ENCODE measurements at regions of chr22 and their contacts with region 1.

Region 1: DNA sequence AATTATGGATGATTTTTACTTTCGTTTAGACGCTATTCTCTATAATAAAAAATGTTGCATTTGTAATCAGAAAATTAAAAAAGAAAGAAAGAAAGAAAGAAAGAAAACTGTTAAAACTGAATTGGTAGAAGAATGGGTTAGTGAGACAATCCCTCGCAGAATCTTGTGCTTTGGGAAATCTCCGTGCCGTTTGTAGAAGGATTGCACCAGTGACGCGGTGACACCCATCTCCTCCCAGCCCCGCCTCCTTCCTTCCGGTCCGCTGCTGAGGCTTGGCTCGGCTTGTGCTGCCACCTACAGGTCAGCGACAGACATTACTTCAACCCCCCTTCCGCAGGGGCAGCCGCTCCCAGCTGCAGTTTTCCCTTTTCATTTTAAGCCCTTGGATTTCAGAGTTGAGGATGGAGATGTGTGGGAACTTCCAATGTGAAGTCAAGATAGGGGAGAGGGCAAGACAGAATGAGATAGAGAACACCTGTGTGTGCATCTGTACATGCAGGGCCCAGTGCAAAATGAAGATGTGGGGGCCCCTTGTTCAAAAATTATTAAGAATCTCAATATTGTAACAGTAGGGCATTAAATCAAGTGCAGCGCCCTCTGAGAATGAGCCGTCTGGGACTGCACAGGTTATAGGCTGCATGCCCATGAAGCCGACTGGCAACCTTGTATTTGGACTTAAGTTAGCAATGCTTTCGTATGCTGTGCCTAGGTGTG is 41.1 kb downstream of the TST start:
- DNase-seq: peak; percentile 96
- H3K4me3 ChIP-seq: peak overlapping the region in 3 of 4 donors; percentile 36 to 48 (median 45)
- H3K27ac ChIP-seq: peak overlapping the region in 3 of 4 donors; percentile 19 to 59 (median 50)
- H3K4me1 ChIP-seq: peaks cover 0 to 7% (median 2%) of the 10 kb centered on the region in 4 donors
- H3K27me3 ChIP-seq: no peaks in the 10 kb centered on the region
- CTCF ChIP-seq: peak; percentile 92 to 94 (median 93)
- EP300 ChIP-seq: no peak
- POLR2A ChIP-seq: no peak

Region 2: DNA sequence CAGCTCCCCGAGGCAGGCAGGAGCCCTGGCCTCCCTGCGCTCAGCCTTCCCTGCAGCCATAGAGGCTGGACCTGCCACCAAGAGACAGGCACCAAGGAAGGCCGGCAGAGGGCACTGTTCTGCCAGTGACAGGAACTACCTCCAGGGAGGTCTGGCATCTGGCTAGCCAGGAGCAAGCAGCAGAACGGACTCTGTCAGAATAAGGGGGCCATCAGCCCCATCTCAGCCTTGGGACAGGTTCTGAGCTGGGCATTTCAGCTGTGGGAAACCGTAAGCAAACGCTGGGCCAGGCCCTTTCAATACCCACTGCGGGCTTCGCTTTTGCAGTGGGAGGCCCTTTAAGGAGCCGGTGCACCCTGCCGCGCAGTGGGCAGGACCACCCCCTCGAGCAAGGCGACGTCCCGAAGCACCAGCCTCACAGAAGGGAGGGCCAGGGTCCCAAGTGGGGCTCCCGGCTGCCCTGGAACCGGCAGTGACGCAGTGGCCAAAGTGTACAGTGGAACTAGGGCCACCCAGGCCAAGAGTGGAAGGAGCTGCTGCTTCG is 220.4 kb before region 1 on chr22:
- intact Hi-C with region 1: loop called (anchors 5 kb)
- DNase-seq: peak; percentile 88
- H3K4me3 ChIP-seq: no peak overlapping the region
- H3K27ac ChIP-seq: no peak overlapping the region
- H3K4me1 ChIP-seq: peaks cover 0 to 33% (median 28%) of the 10 kb centered on the region in 4 donors
- H3K27me3 ChIP-seq: peaks cover 3 to 30% (median 14%) of the 10 kb centered on the region in 3 donors
- CTCF ChIP-seq: peak; percentile 65 to 84 (median 70)
- EP300 ChIP-seq: no peak
- POLR2A ChIP-seq: no peak

Region 3: GRCh38 chr22:36856121-36856791 is 121.8 kb before region 1 on chr22:
- intact Hi-C with region 1: loop called (anchors 1 kb)
- DNase-seq: peak; percentile 94
- H3K4me3 ChIP-seq: no peak overlapping the region
- H3K27ac ChIP-seq: no peak overlapping the region
- H3K4me1 ChIP-seq: peaks cover 0 to 12% (median 3%) of the 10 kb centered on the region in 4 donors
- H3K27me3 ChIP-seq: no peaks in the 10 kb centered on the region
- CTCF ChIP-seq: peak; percentile 99 to 100 (median 100)
- EP300 ChIP-seq: no peak
- POLR2A ChIP-seq: no peak

Region 4: DNA sequence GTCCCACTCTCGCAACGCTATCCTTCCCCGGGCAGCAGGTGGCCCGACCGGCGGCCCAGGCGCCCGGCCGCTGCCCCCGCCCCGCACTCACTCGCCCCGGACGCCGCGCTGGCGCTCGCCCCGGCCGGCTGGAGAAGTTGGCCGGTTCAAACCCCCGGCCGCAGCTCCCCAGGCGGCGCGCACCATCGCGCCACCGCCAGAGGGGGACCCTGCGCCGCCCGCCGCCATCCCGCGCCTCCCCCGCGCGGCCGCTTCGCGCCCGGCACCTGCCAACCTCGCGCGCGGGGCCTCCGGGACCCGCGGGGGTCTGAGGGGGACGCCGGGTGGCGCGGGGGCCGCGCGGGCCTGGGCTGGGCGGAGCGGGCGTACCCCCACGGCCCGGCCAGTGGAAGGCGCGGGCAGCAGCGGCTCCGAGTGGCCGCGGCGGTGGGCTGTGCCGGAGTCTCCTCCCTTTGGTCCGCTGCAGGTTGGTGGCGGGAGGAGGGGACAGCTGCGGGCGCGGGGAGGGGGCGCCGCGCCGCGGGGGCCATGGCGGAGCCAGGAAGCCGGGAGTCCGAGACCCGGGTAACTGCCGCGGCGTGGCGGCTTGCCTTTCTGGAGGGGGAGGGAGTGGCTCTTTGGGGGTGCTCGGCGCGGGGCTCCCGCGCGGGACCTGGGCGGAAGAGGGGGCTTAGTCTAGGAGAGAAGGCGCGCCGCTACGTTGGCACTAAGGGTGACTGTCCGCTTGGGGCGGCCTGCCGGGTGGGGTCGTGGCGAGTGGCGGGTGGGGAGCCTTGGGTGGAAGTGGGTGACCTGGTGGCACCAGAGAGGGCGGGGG is 41.4 kb after region 1 on chr22 and contains the starts of genes MPST and TST:
- intact Hi-C with region 1: loop called (anchors 5 kb)
- DNase-seq: peak; percentile 89
- H3K4me3 ChIP-seq: peak within 1 kb of the TSS; percentile 76 to 99 (median 91)
- H3K27ac ChIP-seq: peak within 1 kb of the TSS; percentile 88 to 93 (median 89)
- H3K4me1 ChIP-seq: peaks cover 0 to 58% (median 46%) of the 10 kb centered on the region in 4 donors
- H3K27me3 ChIP-seq: no peaks in the 10 kb centered on the region
- CTCF ChIP-seq: no peak
- EP300 ChIP-seq: no peak
- POLR2A ChIP-seq: peak; percentile 39 to 56
- total RNA-seq, gene MPST: 94.2 to 143 (median 111) TPM
- total RNA-seq, gene TST: 29.1 to 31.4 (median 30.3) TPM